CD4-positive, alpha-beta T cell (primary cell): ENCODE measurements at regions of chr20 and their contacts with region 1.

Region 1: GRCh38 chr20:330233-331149 is 5.1 kb downstream of the SOX12 start:
- DNase-seq: peak in 13 of 14 experiments; percentile 39 to 85 (median 53)
- ATAC-seq: peak; percentile 44
- H3K4me3 ChIP-seq: no peak overlapping the region
- H3K4me3 Mint-ChIP-seq: peak overlapping the region; percentile 76
- H3K27ac ChIP-seq: no peak overlapping the region
- H3K27ac Mint-ChIP-seq: peak overlapping the region; percentile 74
- H3K4me1 ChIP-seq: peaks cover 20% of the 10 kb centered on the region
- H3K4me1 Mint-ChIP-seq: peaks cover 32% of the 10 kb centered on the region
- H3K27me3 ChIP-seq: no peaks in the 10 kb centered on the region
- H3K27me3 Mint-ChIP-seq: no peaks in the 10 kb centered on the region
- CTCF ChIP-seq: peak; percentile 93

Region 2: GRCh38 chr20:208942-209566 is 121.4 kb before region 1 on chr20:
- CTCF ChIA-PET with region 1: interaction called, 11 read pairs
- POLR2A ChIA-PET with region 1: interaction called, 3 read pairs
- intact Hi-C with region 1: loop called (anchors 1 kb)
- DNase-seq: peak in 6 of 14 experiments; percentile 8 to 67 (median 46)
- ATAC-seq: peak; percentile 83
- H3K4me3 ChIP-seq: no peak overlapping the region
- H3K4me3 Mint-ChIP-seq: no peak overlapping the region
- H3K27ac ChIP-seq: no peak overlapping the region
- H3K27ac Mint-ChIP-seq: no peak overlapping the region
- H3K4me1 ChIP-seq: no peaks in the 10 kb centered on the region
- H3K4me1 Mint-ChIP-seq: no peaks in the 10 kb centered on the region
- H3K27me3 ChIP-seq: no peaks in the 10 kb centered on the region
- H3K27me3 Mint-ChIP-seq: no peaks in the 10 kb centered on the region
- CTCF ChIP-seq: peak; percentile 70

Region 3: DNA sequence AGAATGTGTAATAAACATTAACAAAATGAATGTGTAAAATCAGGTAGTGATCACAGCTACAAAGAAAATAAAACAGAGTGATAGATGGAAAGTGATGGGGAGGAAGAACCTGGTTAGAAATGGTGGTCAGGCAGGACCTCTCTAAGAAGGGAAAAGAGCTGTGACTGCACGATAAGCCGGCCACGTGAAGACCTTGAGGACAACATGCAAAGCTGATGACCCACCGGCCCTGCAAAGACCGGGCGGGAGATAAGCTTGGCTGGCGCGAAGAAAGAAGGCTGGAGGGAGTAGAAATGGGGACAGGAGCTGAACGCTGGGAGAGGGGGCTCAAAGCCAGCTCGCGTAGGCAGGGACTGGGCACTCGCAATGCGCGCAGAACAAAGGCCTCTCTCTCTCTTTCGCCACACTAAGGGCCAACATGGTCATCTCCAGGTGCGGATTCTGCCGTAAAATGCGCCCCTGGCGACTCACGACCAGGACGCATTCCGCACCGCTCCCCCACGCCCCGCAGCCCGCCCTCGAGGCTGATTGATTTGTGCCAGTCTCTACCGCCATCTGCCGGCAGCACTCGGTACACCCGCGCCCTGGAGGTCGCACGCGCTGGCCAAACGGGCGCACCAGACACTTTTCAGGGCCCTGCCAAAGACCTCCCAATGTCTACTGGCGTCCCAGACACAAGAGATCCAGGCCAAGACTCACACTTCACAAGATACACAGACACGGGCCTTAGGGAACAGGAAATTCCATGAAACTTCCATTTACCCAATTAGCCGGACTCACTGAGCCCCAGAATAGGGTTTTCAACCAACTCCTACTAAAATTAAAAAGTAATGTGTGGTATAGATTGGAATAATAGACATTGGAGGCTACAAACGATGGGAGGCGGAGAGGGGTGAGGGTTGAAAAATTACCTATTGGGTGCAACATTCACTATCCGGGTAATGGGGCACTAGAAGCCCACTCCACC is 63.6 kb before region 1 on chr20:
- CTCF ChIA-PET with region 1: interaction called, 38 read pairs
- POLR2A ChIA-PET with region 1: interaction called, 3 read pairs
- intact Hi-C with region 1: loop called (anchors 1 to 2 kb)
- DNase-seq: peak; percentile 82 to 94 (median 87)
- ATAC-seq: peak; percentile 100
- H3K4me3 ChIP-seq: peak overlapping the region; percentile 57
- H3K4me3 Mint-ChIP-seq: peak overlapping the region; percentile 86
- H3K27ac ChIP-seq: no peak overlapping the region
- H3K27ac Mint-ChIP-seq: no peak overlapping the region
- H3K4me1 ChIP-seq: peaks cover 8% of the 10 kb centered on the region
- H3K4me1 Mint-ChIP-seq: peaks cover 10% of the 10 kb centered on the region
- H3K27me3 ChIP-seq: no peaks in the 10 kb centered on the region
- H3K27me3 Mint-ChIP-seq: peaks cover 4% of the 10 kb centered on the region
- CTCF ChIP-seq: peak; percentile 96

Region 4: GRCh38 chr20:290084-290831 is 40.2 kb before region 1 on chr20 and contains the start of gene C20orf96:
- CTCF ChIA-PET with region 1: interaction called, 6 read pairs
- POLR2A ChIA-PET with region 1: interaction called, 114 read pairs
- intact Hi-C with region 1: loop called in 1 of 2 experiments (anchors 1 kb)
- DNase-seq: peak; percentile 67 to 94 (median 81)
- ATAC-seq: peak; percentile 87
- H3K4me3 ChIP-seq: peak within 1 kb of the TSS; percentile 58
- H3K4me3 Mint-ChIP-seq: no peak within 1 kb of the TSS
- H3K27ac ChIP-seq: peak within 1 kb of the TSS in 1 of 2 donors; percentile 5
- H3K27ac Mint-ChIP-seq: no peak within 1 kb of the TSS
- H3K4me1 ChIP-seq: peaks cover 21% of the 10 kb centered on the region
- H3K4me1 Mint-ChIP-seq: peaks cover 6% of the 10 kb centered on the region
- H3K27me3 ChIP-seq: no peaks in the 10 kb centered on the region
- H3K27me3 Mint-ChIP-seq: no peaks in the 10 kb centered on the region
- CTCF ChIP-seq: peak; percentile 40
- total RNA-seq, gene C20orf96: 2.4 to 3.3 TPM